CD8-positive, alpha-beta memory T cell (primary cell): ENCODE measurements at regions of chr16 and their contacts with region 1.

Region 1: GRCh38 chr16:68264128-68265077 is at the start of gene SLC7A6:
- DNase-seq: peak; percentile 79 to 88 (median 86)
- H3K4me3 ChIP-seq: peak within 1 kb of the TSS; percentile 84
- H3K4me3 Mint-ChIP-seq: peak within 1 kb of the TSS; percentile 94 to 98 (median 97)
- H3K27ac ChIP-seq: peak within 1 kb of the TSS; percentile 86
- H3K27ac Mint-ChIP-seq: peak within 1 kb of the TSS; percentile 99 to 100 (median 99)
- H3K4me1 ChIP-seq: peaks cover 45% of the 10 kb centered on the region
- H3K4me1 Mint-ChIP-seq: peaks cover 42 to 60% (median 55%) of the 10 kb centered on the region in 3 donors
- H3K27me3 ChIP-seq: no peaks in the 10 kb centered on the region
- H3K27me3 Mint-ChIP-seq: peaks cover 0 to 2% of the 10 kb centered on the region in 2 donors
- total RNA-seq, gene SLC7A6: 91.2 to 94.9 TPM

Region 2: GRCh38 chr16:68251832-68252231 is 12.6 kb before region 1 on chr16:
- CTCF ChIA-PET with region 1: interaction called, 42 read pairs
- POLR2A ChIA-PET with region 1: no interaction called
- DNase-seq: no peak
- H3K4me3 ChIP-seq: no peak overlapping the region
- H3K4me3 Mint-ChIP-seq: no peak overlapping the region
- H3K27ac ChIP-seq: no peak overlapping the region
- H3K27ac Mint-ChIP-seq: no peak overlapping the region
- H3K4me1 ChIP-seq: no peaks in the 10 kb centered on the region
- H3K4me1 Mint-ChIP-seq: peaks cover under 1 to 14% (median 4%) of the 10 kb centered on the region in 3 donors
- H3K27me3 ChIP-seq: no peaks in the 10 kb centered on the region
- H3K27me3 Mint-ChIP-seq: peaks cover 0 to 1% of the 10 kb centered on the region in 2 donors

Region 3: GRCh38 chr16:68289621-68290329 is 25.4 kb after region 1 on chr16:
- CTCF ChIA-PET with region 1: interaction called, 319 read pairs
- POLR2A ChIA-PET with region 1: interaction called, 21 read pairs
- DNase-seq: peak in 3 of 5 donors; percentile 40 to 57 (median 48)
- H3K4me3 ChIP-seq: peak overlapping the region; percentile 19
- H3K4me3 Mint-ChIP-seq: peak overlapping the region; percentile 18 to 71 (median 56)
- H3K27ac ChIP-seq: peak overlapping the region; percentile 35
- H3K27ac Mint-ChIP-seq: peak overlapping the region; percentile 84 to 98 (median 92)
- H3K4me1 ChIP-seq: peaks cover 82% of the 10 kb centered on the region
- H3K4me1 Mint-ChIP-seq: peaks cover 83 to 89% (median 83%) of the 10 kb centered on the region in 3 donors
- H3K27me3 ChIP-seq: no peaks in the 10 kb centered on the region
- H3K27me3 Mint-ChIP-seq: no peaks in the 10 kb centered on the region

Region 4: GRCh38 chr16:68297908-68298307 is 33.5 kb after region 1 on chr16:
- CTCF ChIA-PET with region 1: interaction called, 131 read pairs
- POLR2A ChIA-PET with region 1: interaction called, 3 read pairs
- DNase-seq: no peak
- H3K4me3 ChIP-seq: no peak overlapping the region
- H3K4me3 Mint-ChIP-seq: no peak overlapping the region
- H3K27ac ChIP-seq: no peak overlapping the region
- H3K27ac Mint-ChIP-seq: peak overlapping the region in 5 of 8 donors; percentile 31 to 87 (median 46)
- H3K4me1 ChIP-seq: peaks cover under 1% of the 10 kb centered on the region
- H3K4me1 Mint-ChIP-seq: peaks cover 12 to 40% (median 17%) of the 10 kb centered on the region in 3 donors
- H3K27me3 ChIP-seq: no peaks in the 10 kb centered on the region
- H3K27me3 Mint-ChIP-seq: no peaks in the 10 kb centered on the region

Region 5: GRCh38 chr16:68310761-68311511 is 46.5 kb after region 1 on chr16 and contains the starts of genes PRMT7 and SLC7A6OS:
- CTCF ChIA-PET with region 1: interaction called, 405 read pairs
- POLR2A ChIA-PET with region 1: interaction called, 26 read pairs
- DNase-seq: peak; percentile 90 to 94 (median 92)
- H3K4me3 ChIP-seq: peak within 1 kb of the TSS; percentile 95
- H3K4me3 Mint-ChIP-seq: peak within 1 kb of the TSS; percentile 90 to 99 (median 98)
- H3K27ac ChIP-seq: peak within 1 kb of the TSS; percentile 83
- H3K27ac Mint-ChIP-seq: peak within 1 kb of the TSS; percentile 92 to 98 (median 98)
- H3K4me1 ChIP-seq: peaks cover 43% of the 10 kb centered on the region
- H3K4me1 Mint-ChIP-seq: peaks cover 44 to 63% (median 53%) of the 10 kb centered on the region in 3 donors
- H3K27me3 ChIP-seq: no peaks in the 10 kb centered on the region
- H3K27me3 Mint-ChIP-seq: no peaks in the 10 kb centered on the region
- total RNA-seq, gene PRMT7: 61.1 to 67.5 TPM
- total RNA-seq, gene SLC7A6OS: 21.8 to 25.5 TPM

Region 6: DNA sequence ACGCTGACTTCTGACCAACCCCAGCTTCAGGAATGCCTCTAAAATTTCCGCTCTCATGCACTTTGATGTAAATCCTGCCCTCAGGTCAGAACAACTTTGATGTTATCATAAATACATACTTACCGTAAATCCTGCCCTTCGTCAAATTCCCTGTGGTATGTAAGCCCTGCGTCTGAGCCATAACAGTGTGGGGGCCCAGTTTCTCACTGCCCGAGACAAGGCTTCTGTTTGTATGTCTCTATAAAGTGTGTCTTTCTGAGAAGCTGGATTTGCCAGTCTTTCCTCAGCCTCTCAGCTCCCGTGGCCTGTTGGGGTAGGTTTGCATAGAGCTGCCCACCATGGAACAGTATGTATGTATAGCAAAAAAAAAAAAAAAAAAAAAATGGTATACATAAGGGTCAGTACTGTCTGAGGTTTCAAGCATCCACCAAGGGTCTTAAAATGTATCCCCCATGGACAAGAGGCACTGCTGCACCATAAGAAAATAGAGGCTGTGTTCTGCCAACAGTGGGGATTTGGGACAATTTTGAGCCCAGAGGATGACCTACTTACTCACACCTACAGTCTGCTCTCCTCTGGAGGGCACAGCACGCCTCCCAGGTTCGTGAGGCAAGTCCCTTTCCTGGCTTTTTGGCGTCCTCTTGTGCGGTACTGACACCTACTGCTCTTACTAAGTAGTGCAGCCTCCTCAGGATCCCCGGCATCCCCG is 63.9 kb after region 1 on chr16:
- CTCF ChIA-PET with region 1: interaction called, 405 read pairs
- POLR2A ChIA-PET with region 1: interaction called, 14 read pairs
- DNase-seq: peak; percentile 59 to 87 (median 70)
- H3K4me3 ChIP-seq: no peak overlapping the region
- H3K4me3 Mint-ChIP-seq: no peak overlapping the region
- H3K27ac ChIP-seq: no peak overlapping the region
- H3K27ac Mint-ChIP-seq: peak overlapping the region in 5 of 8 donors; percentile 7 to 83 (median 38)
- H3K4me1 ChIP-seq: peaks cover 12% of the 10 kb centered on the region
- H3K4me1 Mint-ChIP-seq: peaks cover 3 to 12% (median 5%) of the 10 kb centered on the region in 3 donors
- H3K27me3 ChIP-seq: no peaks in the 10 kb centered on the region
- H3K27me3 Mint-ChIP-seq: no peaks in the 10 kb centered on the region

Region 7: DNA sequence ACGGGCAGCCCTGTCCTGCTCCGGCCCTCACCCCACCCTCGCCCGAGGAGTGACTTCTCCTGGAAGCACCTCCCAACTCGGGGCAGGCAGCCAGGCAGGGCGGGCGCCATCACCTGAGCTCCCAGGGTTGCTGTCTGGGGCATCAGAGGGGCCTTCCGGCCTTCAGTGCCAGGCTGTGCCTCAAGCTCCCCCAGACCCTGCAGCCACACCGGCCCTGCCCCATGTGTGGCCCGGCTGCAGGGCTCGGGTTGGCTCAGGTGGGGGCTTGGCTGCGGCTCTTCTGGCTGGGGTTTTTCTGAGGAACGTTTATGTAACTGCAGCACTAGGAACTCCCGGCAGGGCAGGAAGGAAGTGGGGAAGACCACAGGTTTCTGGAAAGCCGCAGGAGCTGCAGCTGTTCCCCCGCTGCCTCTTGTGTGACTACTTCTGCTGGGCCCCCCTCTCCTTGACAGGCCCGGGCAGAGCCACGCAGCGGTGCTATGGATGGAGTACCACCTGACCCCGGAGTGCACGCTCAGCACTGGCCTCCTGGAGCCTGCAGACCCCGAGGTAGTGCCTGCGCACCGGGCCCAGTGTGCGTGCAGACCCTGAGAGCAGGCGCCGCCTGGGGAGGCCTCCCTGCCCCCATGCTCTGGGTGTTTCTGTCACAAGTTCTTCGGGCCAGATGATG is 92.0 kb after region 1 on chr16:
- CTCF ChIA-PET with region 1: interaction called, 10 read pairs
- POLR2A ChIA-PET with region 1: no interaction called
- DNase-seq: peak; percentile 51 to 83 (median 78)
- H3K4me3 ChIP-seq: peak overlapping the region; percentile 49
- H3K4me3 Mint-ChIP-seq: peak overlapping the region; percentile 38 to 82 (median 80)
- H3K27ac ChIP-seq: no peak overlapping the region
- H3K27ac Mint-ChIP-seq: peak overlapping the region in 7 of 8 donors; percentile 22 to 85 (median 44)
- H3K4me1 ChIP-seq: peaks cover 28% of the 10 kb centered on the region
- H3K4me1 Mint-ChIP-seq: peaks cover 29 to 43% (median 31%) of the 10 kb centered on the region in 3 donors
- H3K27me3 ChIP-seq: no peaks in the 10 kb centered on the region
- H3K27me3 Mint-ChIP-seq: no peaks in the 10 kb centered on the region